ENCODE measurements at regions of chr6 and their contacts with region 1.

Region 1: DNA sequence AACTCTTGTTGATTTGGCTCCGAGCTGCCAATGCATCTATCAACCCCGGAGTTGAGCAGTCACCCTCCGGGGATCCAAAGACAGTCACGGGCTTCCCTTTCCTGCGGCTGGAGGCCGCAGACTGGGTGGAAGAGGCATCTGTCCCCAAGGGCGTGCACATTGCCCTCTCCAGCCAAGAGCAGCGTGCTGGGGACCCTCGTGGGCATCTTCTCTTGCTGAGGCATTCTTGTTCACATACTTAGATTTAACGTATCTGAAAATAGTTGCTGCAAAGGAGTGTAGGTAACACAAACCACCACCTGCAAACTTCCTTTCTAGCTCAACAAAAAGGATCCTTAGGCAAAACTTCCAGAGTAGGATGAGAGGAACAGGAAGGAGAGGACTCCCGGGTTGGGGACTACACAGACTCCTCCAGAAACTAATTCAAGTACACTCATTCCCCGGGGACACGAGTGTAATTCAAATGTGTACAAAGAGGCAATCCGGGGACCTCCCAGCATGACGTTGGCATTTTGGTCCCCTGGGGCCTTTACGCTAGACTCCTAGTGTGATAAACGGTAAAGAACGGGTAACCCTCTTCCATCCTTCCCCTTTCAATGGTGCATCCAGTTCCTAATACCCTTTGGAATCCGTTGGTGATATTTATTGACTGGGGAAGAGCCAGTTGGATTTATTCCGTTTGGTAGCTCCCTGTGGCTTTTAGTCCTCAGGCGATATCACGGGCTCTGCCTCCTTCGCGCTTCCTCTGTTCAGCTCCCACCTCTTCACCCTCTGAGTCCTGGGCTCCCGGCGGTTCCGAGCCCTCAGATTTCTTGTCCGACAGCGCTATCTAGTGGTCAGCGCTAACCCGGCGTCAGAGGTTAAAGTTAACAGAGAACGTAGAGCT is 2.7 kb upstream of the COL12A1 start:
- DNase-seq: peak; percentile 71
- H3K4me3 ChIP-seq: no peak overlapping the region
- H3K27ac ChIP-seq: no peak overlapping the region
- H3K4me1 ChIP-seq: peaks cover 9% of the 10 kb centered on the region
- H3K27me3 ChIP-seq: no peaks in the 10 kb centered on the region
- CTCF ChIP-seq: peak; percentile 86 to 90

Region 2: GRCh38 chr6:73520688-73521350 is 1687.7 kb before region 1 on chr6 and contains the start of gene EEF1A1:
- CTCF ChIA-PET with region 1: no interaction called
- dilution Hi-C with region 1: no loop called
- in situ Hi-C with region 1: no loop called
- intact Hi-C with region 1: loop called (anchors 5 kb)
- DNase-seq: peak; percentile 100
- H3K4me3 ChIP-seq: peak within 1 kb of the TSS; percentile 67 to 93 (median 79)
- H3K27ac ChIP-seq: peak within 1 kb of the TSS; percentile 98
- H3K4me1 ChIP-seq: peaks cover 19% of the 10 kb centered on the region
- H3K27me3 ChIP-seq: no peaks in the 10 kb centered on the region
- CTCF ChIP-seq: peak in 1 of 2 donors; percentile 7
- total RNA-seq, gene EEF1A1: 7,332 to 17,769 TPM

Region 3: GRCh38 chr6:73969971-73970970 is 1238.3 kb before region 1 on chr6:
- CTCF ChIA-PET with region 1: interaction called, 4 read pairs
- dilution Hi-C with region 1: no loop called
- in situ Hi-C with region 1: loop called in 1 of 2 experiments (anchors 25 kb)
- intact Hi-C with region 1: loop called (anchors 5 kb)
- DNase-seq: peak; percentile 54
- H3K4me3 ChIP-seq: no peak overlapping the region
- H3K27ac ChIP-seq: no peak overlapping the region
- H3K4me1 ChIP-seq: no peaks in the 10 kb centered on the region
- H3K27me3 ChIP-seq: no peaks in the 10 kb centered on the region
- CTCF ChIP-seq: peak; percentile 80 to 82

Region 4: DNA sequence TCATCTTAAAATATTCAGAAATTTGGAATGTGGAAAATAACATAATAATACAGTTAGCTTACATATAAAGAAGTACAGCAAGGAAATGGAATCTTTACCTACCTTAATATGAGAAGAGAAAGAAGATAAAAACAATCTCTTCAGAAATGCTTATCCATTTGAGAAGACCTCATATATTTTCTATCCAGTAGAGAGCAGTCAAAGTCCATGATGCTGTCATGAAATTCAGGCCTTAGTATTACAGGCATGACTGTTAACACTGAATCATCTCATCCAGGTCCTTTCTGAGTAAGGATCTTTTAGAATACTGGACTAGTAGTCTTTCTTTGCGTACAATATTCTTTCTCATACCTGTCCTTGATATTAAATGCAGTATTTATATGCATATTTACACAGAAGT is 799.1 kb before region 1 on chr6:
- CTCF ChIA-PET with region 1: interaction called, 3 read pairs
- dilution Hi-C with region 1: no loop called
- in situ Hi-C with region 1: loop called (anchors 5 to 25 kb)
- intact Hi-C with region 1: loop called (anchors 1 kb)
- DNase-seq: peak; percentile 49
- H3K4me3 ChIP-seq: no peak overlapping the region
- H3K27ac ChIP-seq: no peak overlapping the region
- H3K4me1 ChIP-seq: no peaks in the 10 kb centered on the region
- H3K27me3 ChIP-seq: no peaks in the 10 kb centered on the region
- CTCF ChIP-seq: peak; percentile 29 to 70

Region 5: GRCh38 chr6:74899416-74899815 is 309.1 kb before region 1 on chr6:
- CTCF ChIA-PET with region 1: interaction called, 4 read pairs
- dilution Hi-C with region 1: no loop called
- in situ Hi-C with region 1: loop called (anchors 10 to 25 kb)
- intact Hi-C with region 1: loop called (anchors 1 kb)
- DNase-seq: peak; percentile 79
- H3K4me3 ChIP-seq: no peak overlapping the region
- H3K27ac ChIP-seq: peak overlapping the region; percentile 31
- H3K4me1 ChIP-seq: peaks cover 10% of the 10 kb centered on the region
- H3K27me3 ChIP-seq: no peaks in the 10 kb centered on the region
- CTCF ChIP-seq: peak; percentile 83 to 95

Region 6: DNA sequence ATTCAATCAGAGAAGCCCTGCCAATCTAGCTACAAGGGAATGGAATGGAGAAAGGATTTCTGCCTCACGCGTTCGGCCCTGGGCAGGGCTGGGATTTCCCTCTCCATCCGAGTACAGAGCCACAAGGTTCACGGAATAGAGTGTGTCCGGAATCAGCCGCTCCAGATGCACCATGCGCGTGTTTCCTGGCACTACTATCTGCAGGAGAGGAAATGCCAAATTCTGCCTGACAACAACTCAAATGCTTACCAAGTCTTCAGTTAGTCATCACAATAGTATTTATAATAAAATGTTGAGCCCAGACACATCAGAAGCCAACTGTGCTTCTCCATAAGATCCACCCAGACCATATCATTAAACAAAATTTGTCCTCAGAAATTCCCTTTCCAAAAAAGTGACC is 77.8 kb before region 1 on chr6:
- CTCF ChIA-PET with region 1: no interaction called
- dilution Hi-C with region 1: no loop called
- in situ Hi-C with region 1: no loop called
- intact Hi-C with region 1: loop called (anchors 5 kb)
- DNase-seq: no peak
- H3K4me3 ChIP-seq: no peak overlapping the region
- H3K27ac ChIP-seq: no peak overlapping the region
- H3K4me1 ChIP-seq: no peaks in the 10 kb centered on the region
- H3K27me3 ChIP-seq: no peaks in the 10 kb centered on the region
- CTCF ChIP-seq: no peak